AG04450 (cell line): ENCODE measurements at regions of chr11 and their contacts with region 1.

Region 1: GRCh38 chr11:17730608-17731462 is 3.7 kb upstream of the KCNC1 start:
- DNase-seq: peak; percentile 33
- H3K4me3 ChIP-seq: no peak overlapping the region
- H3K27ac ChIP-seq: no peak overlapping the region
- H3K27me3 ChIP-seq: peaks cover 35% of the 10 kb centered on the region
- CTCF ChIP-seq: peak; percentile 97

Region 2: GRCh38 chr11:17598700-17599459 is 132.0 kb before region 1 on chr11:
- CTCF ChIA-PET with region 1: interaction called, 28 read pairs
- POLR2A ChIA-PET with region 1: no interaction called
- DNase-seq: peak; percentile 26
- H3K4me3 ChIP-seq: no peak overlapping the region
- H3K27ac ChIP-seq: no peak overlapping the region
- H3K27me3 ChIP-seq: peaks cover 4% of the 10 kb centered on the region
- CTCF ChIP-seq: peak; percentile 98

Region 3: GRCh38 chr11:17760102-17761029 is 29.5 kb after region 1 on chr11:
- CTCF ChIA-PET with region 1: interaction called, 16 read pairs
- POLR2A ChIA-PET with region 1: no interaction called
- DNase-seq: no peak
- H3K4me3 ChIP-seq: no peak overlapping the region
- H3K27ac ChIP-seq: no peak overlapping the region
- H3K27me3 ChIP-seq: peaks cover 13% of the 10 kb centered on the region
- CTCF ChIP-seq: peak; percentile 73

Region 4: DNA sequence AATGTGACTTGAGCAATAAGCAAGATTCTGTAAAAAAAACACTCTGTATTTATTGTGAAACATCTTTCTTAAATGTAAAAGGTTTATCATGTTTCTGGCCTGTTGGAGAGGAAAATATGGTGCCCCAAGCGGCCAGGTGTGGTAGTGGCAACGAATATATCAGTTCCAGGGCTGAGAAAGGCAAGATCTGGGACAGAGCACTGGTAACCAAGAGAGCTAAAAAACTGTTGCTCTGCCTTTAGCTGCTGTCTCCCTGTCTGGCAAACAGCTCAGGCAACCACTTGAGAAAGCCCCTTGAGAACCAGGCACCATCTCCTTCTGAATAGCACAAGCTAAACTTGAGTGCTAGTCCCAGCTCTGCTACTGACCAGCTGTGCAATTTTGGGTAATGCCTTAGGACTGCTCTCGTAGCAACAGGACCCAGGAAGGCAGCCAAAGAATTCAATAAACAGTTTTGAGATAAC is 133.7 kb after region 1 on chr11:
- CTCF ChIA-PET with region 1: interaction called, 12 read pairs
- POLR2A ChIA-PET with region 1: no interaction called
- DNase-seq: no peak
- H3K4me3 ChIP-seq: no peak overlapping the region
- H3K27ac ChIP-seq: no peak overlapping the region
- H3K27me3 ChIP-seq: no peaks in the 10 kb centered on the region
- CTCF ChIP-seq: peak; percentile 56

Region 5: GRCh38 chr11:17972987-17973386 is 242.2 kb after region 1 on chr11:
- CTCF ChIA-PET with region 1: interaction called, 678 read pairs
- POLR2A ChIA-PET with region 1: interaction called, 4 read pairs
- DNase-seq: peak; percentile 83
- H3K4me3 ChIP-seq: no peak overlapping the region
- H3K27ac ChIP-seq: no peak overlapping the region
- H3K27me3 ChIP-seq: no peaks in the 10 kb centered on the region
- CTCF ChIP-seq: peak; percentile 97

Region 6: DNA sequence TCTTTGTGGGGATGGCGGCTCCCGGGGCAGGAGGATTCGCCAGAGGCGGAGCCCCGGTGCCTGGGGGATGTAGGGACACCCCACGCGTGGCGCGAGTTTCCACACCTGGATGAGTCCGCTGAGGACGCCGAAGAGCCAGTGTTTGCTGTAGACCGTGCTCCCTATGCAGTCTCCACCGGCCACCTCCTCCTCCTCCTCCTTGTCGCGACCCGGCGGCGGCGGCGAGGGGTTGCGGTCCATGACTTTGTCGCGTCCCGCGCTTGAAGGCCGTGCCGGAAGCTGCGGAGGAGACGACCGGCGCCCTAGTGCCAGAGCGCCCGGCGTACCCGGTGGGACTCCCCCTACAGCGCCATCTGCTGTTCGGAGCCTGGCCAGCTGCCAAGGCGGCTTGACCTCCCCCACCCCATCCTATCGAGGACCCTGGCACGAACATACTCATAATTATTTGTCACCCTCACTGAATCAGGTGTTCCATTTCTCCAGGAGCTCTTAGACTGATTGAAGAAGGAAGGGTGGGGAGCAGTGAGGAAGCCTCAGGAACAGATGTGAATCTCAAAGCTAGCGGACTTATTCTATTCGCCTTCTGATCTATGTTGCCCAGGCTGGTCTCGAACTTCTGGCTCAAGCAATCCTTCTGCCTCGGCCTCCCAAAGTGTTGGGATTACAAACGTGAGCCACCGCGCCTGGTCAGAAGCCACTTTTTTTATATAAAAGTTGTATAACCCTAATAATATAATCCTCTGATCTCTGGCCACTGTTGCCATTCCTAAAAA is 375.2 kb after region 1 on chr11 and contains the start of gene SAAL1:
- CTCF ChIA-PET with region 1: interaction called, 14 read pairs
- POLR2A ChIA-PET with region 1: no interaction called
- DNase-seq: no peak
- H3K4me3 ChIP-seq: peak within 1 kb of the TSS; percentile 90
- H3K27ac ChIP-seq: no peak within 1 kb of the TSS
- H3K27me3 ChIP-seq: peaks cover 2% of the 10 kb centered on the region
- CTCF ChIP-seq: peak; percentile 59
- polyA plus RNA-seq, gene SAAL1: 15.4 and 17.0 TPM in 2 replicates